ENCODE measurements at regions of chr11 and their contacts with region 1.

Region 1: DNA sequence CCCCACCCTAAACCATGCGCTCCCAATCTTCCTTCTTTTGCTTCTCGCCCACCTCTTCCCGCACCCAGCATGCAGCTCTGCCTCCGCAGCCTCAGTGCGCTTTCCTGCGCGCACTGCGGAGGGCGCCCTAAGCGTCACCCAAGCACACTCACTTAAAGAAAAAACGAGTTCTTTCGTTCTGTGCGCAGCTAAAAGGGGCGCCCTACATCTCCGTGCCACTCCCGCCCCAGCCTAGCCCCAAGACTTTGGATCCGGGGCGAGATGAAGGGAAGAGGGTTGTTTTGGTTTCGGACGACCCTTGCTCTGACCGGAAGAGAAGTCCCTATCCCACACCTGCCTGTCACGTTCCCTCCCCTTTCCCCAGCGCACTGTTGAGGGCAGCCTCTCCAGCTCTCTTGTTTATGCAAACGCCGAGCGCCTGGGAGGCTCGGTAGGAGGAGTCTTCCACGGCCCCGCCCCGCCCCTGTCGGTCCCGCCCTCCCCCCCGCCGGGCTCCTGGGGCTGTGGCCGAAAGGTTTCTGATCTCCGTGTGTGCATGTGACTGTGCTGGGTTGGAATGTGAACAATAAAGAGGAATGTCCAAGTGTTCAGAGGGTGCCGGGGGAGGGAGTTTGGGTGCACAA is 5.3 kb downstream of the VSIG2 start:
- DNase-seq: peak; percentile 83
- H3K4me3 Mint-ChIP-seq: peak overlapping the region; percentile 95
- H3K27ac Mint-ChIP-seq: peak overlapping the region; percentile 89
- H3K4me1 Mint-ChIP-seq: peaks cover 32% of the 10 kb centered on the region
- H3K27me3 Mint-ChIP-seq: peaks cover 8% of the 10 kb centered on the region

Region 2: DNA sequence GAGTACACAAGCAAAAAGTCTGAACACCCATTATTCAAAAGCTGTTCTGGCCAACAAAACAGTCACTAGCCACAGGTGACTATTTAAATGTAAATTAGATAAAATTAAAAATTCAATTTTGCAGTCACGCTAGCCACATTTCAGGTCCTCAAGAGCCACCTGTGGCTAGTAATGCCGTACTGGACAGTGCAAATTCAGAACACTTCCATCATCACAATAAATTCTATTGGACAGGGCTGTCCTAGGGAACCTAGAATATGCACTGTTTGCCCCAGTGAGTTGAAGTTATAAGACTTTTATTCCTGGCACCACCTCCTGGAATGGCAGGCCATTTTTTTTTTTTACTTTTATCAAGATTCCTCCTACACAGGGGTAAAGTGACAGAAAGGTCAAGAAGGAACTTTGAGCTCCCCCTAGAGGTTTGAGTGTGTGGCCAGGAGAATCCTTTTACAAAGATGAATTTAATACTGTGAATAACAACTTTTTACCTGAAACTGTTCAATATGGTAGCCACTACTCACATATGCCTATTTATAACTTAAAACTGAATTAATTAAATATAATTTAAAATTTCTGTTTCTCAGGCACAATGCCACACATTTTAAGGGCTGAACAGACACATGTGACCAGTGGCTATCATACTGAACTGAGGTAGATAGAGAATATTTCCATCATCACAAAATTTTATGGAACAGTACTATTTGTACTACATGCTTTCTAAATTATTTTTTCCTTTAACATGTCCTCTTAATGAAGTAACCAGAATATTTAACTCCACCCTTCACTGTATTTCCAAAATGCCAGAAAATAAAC is 46.9 kb after region 1 on chr11:
- CTCF ChIA-PET with region 1: interaction called, 15 read pairs
- POLR2A ChIA-PET with region 1: interaction called, 12 read pairs
- DNase-seq: no peak
- H3K4me3 Mint-ChIP-seq: no peak overlapping the region
- H3K27ac Mint-ChIP-seq: no peak overlapping the region
- H3K4me1 Mint-ChIP-seq: peaks cover 41% of the 10 kb centered on the region
- H3K27me3 Mint-ChIP-seq: no peaks in the 10 kb centered on the region

Region 3: DNA sequence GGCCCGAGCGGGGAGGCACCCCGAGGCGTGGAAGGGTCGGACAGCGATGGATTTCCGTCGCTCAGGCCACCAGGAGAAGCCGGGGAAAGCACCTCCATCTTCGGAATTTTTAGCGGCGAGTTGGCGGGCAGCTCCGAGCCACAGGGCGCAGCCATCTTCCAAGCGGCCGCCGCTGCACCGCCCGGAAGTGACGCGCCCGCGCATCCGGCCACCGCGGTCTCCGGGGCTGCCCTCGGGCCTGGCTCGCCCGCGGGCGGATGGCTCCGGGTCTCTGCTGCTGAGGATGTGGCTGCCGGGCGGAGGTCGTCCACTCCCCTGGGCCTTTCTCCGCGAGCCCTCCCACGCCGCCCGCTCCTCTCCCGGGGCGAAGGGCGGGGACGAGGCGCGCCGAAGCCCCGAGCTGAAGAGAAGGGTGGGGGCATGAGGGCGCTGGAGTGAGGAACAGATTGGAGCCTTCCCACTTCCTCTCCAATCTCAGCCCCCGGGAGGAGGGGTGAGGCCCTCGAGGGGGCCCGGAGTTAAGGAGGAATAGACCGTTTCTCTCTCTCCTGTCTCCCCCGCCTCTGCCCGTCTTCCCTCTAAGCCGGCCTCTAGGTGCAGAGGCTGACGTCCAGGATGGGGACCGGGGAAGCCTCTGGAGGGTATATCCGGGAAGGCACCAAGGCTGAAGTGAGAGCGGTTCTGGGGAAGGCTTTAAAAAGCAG is 53.6 kb after region 1 on chr11 and contains the start of gene MSANTD2:
- CTCF ChIA-PET with region 1: interaction called, 19 read pairs
- POLR2A ChIA-PET with region 1: interaction called, 12 read pairs
- DNase-seq: peak; percentile 86
- H3K4me3 Mint-ChIP-seq: peak within 1 kb of the TSS; percentile 88
- H3K27ac Mint-ChIP-seq: peak within 1 kb of the TSS; percentile 89
- H3K4me1 Mint-ChIP-seq: peaks cover 38% of the 10 kb centered on the region
- H3K27me3 Mint-ChIP-seq: peaks cover 2% of the 10 kb centered on the region
- total RNA-seq, gene MSANTD2: 9.4 to 10.4 TPM

Measured in activated CD4-positive, alpha-beta memory T cell treated with anti-CD3 and anti-CD28 coated beads, Interleukin-2, amount 10 ng/mL, durations not matched to agents 7 days and 5 days (primary cell).